Activated CD8-positive, alpha-beta T cell treated with anti-CD3 and anti-CD28 coated beads, Interleukin-2, amount 10 ng/mL, durations not matched to agents 7 days and 5 days (primary cell): ENCODE measurements at regions of chr14 and their contacts with region 1.

Region 1: DNA sequence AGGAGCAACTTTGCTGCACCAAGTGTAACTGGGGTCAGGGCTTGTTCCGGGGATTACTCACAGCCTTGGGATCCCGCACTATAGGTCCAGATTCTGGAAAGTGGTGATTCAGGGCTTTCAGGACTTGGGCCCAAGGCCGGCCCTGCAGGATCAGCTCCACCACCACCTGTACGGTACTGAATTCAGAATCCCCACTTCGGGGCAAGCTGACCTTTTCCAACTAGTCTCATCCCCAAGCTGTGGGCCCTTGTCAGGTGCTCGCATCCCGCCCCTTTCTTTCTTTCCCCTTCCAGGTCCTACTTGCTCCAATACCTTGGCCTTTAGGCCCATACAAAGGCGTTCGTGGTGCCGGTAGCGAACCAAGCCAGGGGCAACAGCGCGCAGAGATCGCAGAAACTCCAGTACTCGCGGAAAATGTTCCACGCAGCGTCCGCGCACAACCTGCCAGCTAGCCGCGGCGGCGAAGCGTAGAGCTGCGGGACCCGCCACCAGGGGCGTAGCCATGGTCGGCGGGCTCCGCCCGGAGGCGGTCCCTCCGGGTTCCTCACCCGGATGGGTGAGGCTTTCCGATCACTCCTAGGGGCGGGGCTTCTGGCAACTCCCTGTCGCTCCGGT is 487 bp downstream of the TINF2 start:
- DNase-seq: peak; percentile 95
- ATAC-seq: peak; percentile 85
- H3K4me3 Mint-ChIP-seq: peak overlapping the region; percentile 94
- H3K27ac Mint-ChIP-seq: peak overlapping the region; percentile 100
- H3K4me1 Mint-ChIP-seq: peaks cover 54% of the 10 kb centered on the region
- H3K27me3 Mint-ChIP-seq: no peaks in the 10 kb centered on the region

Region 2: DNA sequence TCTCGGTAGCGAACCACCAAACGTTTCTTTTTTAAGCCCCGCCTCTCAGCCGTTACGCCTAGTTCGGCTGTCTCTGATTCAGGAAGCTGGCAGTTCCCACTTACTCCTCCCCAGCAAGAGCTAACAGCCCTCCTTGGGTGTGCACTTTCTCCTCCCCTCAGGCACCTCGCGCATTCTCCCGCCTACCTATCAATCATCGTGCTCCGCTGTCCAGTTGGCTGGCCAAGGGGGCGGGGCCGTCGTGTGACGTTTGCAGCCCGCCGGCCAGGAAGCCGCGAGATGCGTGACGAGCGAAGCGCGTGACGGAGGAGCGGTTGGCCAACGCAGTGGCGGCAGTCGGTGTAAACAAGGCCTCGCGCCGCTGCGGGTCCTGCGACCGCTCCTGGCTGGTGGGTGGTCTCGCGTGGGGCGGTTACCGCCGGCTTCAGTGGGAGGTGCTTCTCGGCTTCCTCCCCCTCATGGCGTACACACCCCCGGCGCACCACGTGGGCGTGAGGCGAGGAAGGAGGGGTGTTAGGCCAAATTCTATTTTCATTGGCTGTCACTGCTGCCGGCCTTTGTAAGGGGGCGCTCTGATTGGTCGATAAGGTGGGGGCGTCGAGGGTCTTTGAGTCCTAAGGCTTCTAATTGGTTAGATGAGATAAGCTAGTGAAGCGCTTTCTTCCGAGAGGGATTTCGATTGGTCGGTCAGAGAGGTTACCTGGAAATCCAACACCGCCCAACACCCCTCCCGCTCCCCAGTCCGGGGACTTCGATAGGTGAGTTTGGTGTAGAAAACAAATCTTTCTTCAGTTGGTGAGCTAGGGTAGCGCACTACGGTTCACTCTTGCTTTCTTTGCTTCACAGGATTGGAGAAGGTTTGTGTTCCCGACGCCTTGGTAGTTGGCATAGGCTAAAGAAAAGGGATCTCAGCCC is 127.1 kb before region 1 on chr14 and contains the starts of genes DCAF11 and NRL:
- CTCF ChIA-PET with region 1: interaction called, 5 read pairs
- POLR2A ChIA-PET with region 1: interaction called, 15 read pairs
- DNase-seq: peak; percentile 99
- ATAC-seq: peak; percentile 92
- H3K4me3 Mint-ChIP-seq: peak within 1 kb of the TSS; percentile 96
- H3K27ac Mint-ChIP-seq: peak within 1 kb of the TSS; percentile 99
- H3K4me1 Mint-ChIP-seq: peaks cover 38% of the 10 kb centered on the region
- H3K27me3 Mint-ChIP-seq: no peaks in the 10 kb centered on the region
- total RNA-seq, gene DCAF11: 101 to 107 TPM
- total RNA-seq, gene NRL: 2.8 to 3.4 TPM

Region 3: DNA sequence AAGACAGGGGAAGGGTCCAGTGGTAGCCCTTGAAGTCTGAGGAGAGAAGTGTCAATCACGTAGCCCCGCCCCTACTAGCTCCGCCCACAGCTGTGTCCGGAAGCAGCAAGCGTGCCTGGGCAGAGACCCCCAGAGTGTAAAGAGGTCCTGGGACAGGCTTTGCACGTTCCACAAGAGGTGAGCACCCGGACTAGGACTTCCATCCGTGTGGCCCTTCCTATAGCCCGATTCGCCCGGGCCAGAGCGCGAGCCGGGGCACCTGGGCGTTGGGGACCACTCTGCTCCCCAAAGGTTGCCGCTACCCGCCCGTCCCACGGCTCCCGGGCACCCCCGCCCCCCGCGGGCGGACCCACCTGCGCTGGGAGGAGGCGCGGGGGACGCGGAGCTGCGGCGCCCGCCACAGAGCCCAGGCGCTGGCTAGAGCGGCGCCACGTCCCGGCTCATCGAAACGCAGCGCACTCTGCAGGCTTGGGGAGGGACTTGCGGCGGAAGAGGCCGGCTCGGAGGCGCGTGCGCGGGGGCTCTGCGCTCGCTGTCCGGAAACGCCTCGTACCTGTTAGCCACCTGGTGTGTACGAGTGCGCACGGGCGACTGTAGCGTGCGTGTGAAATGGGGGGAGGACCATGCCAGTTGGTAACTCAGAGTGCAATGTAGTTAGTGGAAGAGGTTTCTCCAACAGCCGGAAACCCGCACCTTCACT is 29.3 kb after region 1 on chr14 and contains the start of gene RABGGTA:
- CTCF ChIA-PET with region 1: interaction called, 98 read pairs
- POLR2A ChIA-PET with region 1: interaction called, 48 read pairs
- DNase-seq: peak; percentile 93
- ATAC-seq: peak; percentile 94
- H3K4me3 Mint-ChIP-seq: peak within 1 kb of the TSS; percentile 90
- H3K27ac Mint-ChIP-seq: peak within 1 kb of the TSS; percentile 91
- H3K4me1 Mint-ChIP-seq: peaks cover 47% of the 10 kb centered on the region
- H3K27me3 Mint-ChIP-seq: no peaks in the 10 kb centered on the region
- total RNA-seq, gene RABGGTA: 47.7 to 51.8 TPM

Region 4: GRCh38 chr14:24289649-24290249 is 47.8 kb after region 1 on chr14:
- CTCF ChIA-PET with region 1: interaction called, 801 read pairs
- POLR2A ChIA-PET with region 1: interaction called, 73 read pairs
- DNase-seq: peak; percentile 68
- ATAC-seq: peak; percentile 84
- H3K4me3 Mint-ChIP-seq: no peak overlapping the region
- H3K27ac Mint-ChIP-seq: no peak overlapping the region
- H3K4me1 Mint-ChIP-seq: peaks cover 28% of the 10 kb centered on the region
- H3K27me3 Mint-ChIP-seq: no peaks in the 10 kb centered on the region

Region 5: GRCh38 chr14:24442273-24443052 is 200.5 kb after region 1 on chr14 and contains the start of gene SDR39U1:
- CTCF ChIA-PET with region 1: interaction called, 16 read pairs
- POLR2A ChIA-PET with region 1: no interaction called
- DNase-seq: peak; percentile 99
- ATAC-seq: peak; percentile 91
- H3K4me3 Mint-ChIP-seq: peak within 1 kb of the TSS; percentile 96
- H3K27ac Mint-ChIP-seq: peak within 1 kb of the TSS; percentile 98
- H3K4me1 Mint-ChIP-seq: peaks cover 53% of the 10 kb centered on the region
- H3K27me3 Mint-ChIP-seq: no peaks in the 10 kb centered on the region
- total RNA-seq, gene SDR39U1: 47.6 to 58.6 TPM